Heart left ventricle (tissue), 16 donors: ENCODE measurements at regions of chr1 and their contacts with region 1.

Region 1: DNA sequence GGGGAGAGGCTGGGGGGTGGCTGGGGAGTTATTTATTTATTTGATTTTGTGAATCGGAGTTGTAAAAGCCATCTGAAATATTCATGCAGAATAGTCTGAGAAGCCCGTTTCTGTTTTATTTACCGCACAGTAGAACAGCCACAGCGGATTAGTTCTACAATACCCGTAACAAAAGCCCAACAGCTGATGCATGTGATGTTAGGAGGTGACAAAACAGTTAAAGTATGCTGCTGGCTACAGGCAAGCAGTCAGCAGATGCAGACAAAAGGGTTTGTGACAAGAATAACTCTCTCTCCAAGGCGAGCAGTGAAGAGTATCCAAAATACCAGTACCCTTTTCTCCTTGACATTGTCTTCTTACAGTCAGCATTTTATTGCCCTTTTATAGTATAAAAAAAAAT is 42.0 kb downstream of the PROX1 start:
- DNase-seq: peak in 2 of 5 donors; percentile 30 to 35
- ATAC-seq: peak; percentile 77 to 89 (median 85)
- H3K4me3 ChIP-seq: no peak overlapping the region
- H3K27ac ChIP-seq: peak overlapping the region; percentile 77 to 97 (median 92)
- H3K4me1 ChIP-seq: peaks cover 0 to 49% (median 7%) of the 10 kb centered on the region in 12 donors
- H3K27me3 ChIP-seq: no peaks in the 10 kb centered on the region
- CTCF ChIP-seq: no peak
- POLR2A ChIP-seq: no peak

Region 2: DNA sequence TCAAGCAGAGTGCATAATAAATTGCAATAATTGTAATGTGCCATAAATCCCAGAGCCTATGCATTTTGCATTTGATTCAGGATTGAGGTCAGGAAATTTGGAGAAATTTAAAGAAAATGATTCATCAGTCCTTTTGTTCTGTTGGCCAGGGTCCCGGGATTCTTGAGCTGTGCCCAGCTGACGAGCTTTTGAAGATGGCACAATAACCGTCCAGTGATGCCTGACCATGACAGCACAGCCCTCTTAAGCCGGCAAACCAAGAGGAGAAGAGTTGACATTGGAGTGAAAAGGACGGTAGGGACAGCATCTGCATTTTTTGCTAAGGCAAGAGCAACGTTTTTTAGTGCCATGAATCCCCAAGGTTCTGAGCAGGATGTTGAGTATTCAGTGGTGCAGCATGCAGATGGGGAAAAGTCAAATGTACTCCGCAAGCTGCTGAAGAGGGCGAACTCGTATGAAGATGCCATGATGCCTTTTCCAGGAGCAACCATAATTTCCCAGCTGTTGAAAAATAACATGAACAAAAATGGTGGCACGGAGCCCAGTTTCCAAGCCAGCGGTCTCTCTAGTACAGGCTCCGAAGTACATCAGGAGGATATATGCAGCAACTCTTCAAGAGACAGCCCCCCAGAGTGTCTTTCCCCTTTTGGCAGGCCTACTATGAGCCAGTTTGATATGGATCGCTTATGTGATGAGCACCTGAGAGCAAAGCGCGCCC is 33.3 kb before region 1 on chr1:
- intact Hi-C with region 1: loop called in 2 of 10 experiments (anchors 5 kb)
- DNase-seq: peak in 3 of 5 donors; percentile 48 to 63 (median 62)
- ATAC-seq: peak; percentile 25 to 77 (median 59)
- H3K4me3 ChIP-seq: peak overlapping the region in 9 of 12 donors; percentile 12 to 55 (median 33)
- H3K27ac ChIP-seq: peak overlapping the region in 10 of 12 donors; percentile 0 to 62 (median 44)
- H3K4me1 ChIP-seq: peaks cover 0 to 24% (median 7%) of the 10 kb centered on the region in 12 donors
- H3K27me3 ChIP-seq: no peaks in the 10 kb centered on the region
- CTCF ChIP-seq: no peak
- POLR2A ChIP-seq: no peak